Activated T-helper 1 cell treated with anti-CD3 and anti-CD28 coated beads, Interleukin-12 subunit alpha, Interleukin-12 subunit beta, Interleukin-2, Interleukin-4 antibody, amounts not matched to agents 30 ng/mL and 10 ng/mL and 1 ng/mL, durations not matched to agents 14 hours and 24 hours and 36 hours (primary cell): ENCODE measurements at regions of chr3 and their contacts with region 1.

Region 1: GRCh38 chr3:129439817-129440617 is at the starts of genes IFT122 and MBD4:
- DNase-seq: peak; percentile 100
- H3K4me3 Mint-ChIP-seq: peak within 1 kb of the TSS; percentile 89
- H3K27ac Mint-ChIP-seq: peak within 1 kb of the TSS; percentile 98
- H3K4me1 Mint-ChIP-seq: peaks cover 63% of the 10 kb centered on the region
- H3K27me3 Mint-ChIP-seq: no peaks in the 10 kb centered on the region
- total RNA-seq, gene IFT122: 10.0 and 14.7 TPM in 2 replicates
- total RNA-seq, gene MBD4: 44.1 and 53.3 TPM in 2 replicates

Region 2: DNA sequence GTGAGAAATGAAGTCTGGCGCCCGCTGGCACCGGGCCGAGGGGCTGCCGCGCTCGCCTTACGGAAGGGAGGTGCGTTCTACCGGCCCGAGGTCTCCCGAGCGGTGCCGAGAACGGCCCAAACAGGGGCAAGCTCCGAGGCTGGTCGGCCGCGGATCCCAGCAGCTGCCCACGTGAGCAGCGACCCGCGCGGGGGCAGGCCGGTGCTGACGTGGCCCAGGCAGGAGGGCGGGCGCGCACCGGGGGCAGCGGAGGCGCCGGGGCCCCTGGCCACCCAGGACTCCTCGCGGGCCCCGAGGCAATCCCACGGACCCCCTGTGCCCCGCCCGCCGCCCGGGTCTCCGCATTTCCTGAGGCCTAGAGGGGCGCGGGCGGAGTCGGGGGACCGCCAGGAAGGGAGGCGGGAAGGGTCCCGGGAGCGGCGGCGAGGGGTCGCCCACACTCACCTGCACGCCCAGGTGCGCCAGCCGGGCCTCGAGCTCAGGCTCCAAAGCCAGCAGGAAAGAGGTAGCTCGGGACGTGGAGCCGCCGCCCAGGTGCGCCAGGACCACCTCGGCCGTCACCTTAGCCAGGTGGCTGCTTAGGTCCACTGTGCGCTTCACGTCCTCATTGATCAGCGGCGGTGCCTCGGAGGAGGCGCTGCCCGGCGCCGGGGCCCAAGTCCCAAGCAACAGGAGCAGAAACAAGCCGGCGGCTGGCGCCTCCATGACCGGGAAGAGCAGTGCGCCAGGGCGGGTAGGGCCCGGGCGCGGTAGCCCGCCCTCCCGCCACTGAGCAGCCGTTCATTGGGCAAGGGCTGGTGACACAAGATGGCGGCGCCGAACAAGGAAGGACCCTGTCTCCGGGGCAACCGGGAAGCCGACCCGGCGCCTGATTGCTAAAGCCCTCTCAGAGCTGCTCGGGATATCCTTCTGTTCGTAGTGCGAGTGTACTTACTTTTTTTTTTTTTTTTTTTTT is 789.6 kb before region 1 on chr3 and contains the start of gene RPN1:
- intact Hi-C with region 1: loop called (anchors 5 kb)
- DNase-seq: peak; percentile 94
- H3K4me3 Mint-ChIP-seq: peak within 1 kb of the TSS; percentile 90
- H3K27ac Mint-ChIP-seq: peak within 1 kb of the TSS; percentile 92
- H3K4me1 Mint-ChIP-seq: peaks cover 26% of the 10 kb centered on the region
- H3K27me3 Mint-ChIP-seq: no peaks in the 10 kb centered on the region
- total RNA-seq, gene RPN1: 190 and 194 TPM in 2 replicates

Region 3: DNA sequence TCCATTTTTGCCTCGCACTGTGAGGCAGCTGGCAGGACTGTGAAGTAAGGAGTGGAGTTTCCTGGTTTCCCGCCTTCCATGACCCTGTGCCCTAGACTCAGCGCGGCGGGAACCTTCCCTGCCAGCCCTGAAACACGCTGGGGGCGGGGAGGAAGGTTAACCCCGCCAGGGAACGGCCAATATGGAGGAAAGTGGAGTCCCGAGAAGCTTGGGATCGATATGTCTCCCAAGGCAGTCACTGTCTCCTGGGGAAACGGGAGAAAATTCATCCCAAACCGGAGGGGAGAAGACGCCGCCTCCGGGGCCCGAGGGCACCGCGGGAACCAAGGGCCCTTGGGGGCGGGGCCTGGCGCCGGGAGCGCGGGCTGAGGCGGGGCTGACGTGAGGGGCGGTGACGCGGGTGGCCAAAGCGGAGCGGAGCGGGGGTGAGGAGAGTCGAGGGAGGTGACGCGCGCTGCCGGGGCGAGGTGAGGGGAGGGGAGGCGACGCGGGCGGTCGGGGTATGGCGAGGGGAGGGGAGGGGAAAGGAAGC is 161.5 kb before region 1 on chr3 and contains the start of gene HMCES:
- intact Hi-C with region 1: loop called (anchors 1 kb)
- DNase-seq: peak; percentile 92
- H3K4me3 Mint-ChIP-seq: peak within 1 kb of the TSS; percentile 93
- H3K27ac Mint-ChIP-seq: peak within 1 kb of the TSS; percentile 97
- H3K4me1 Mint-ChIP-seq: peaks cover 48% of the 10 kb centered on the region
- H3K27me3 Mint-ChIP-seq: no peaks in the 10 kb centered on the region
- total RNA-seq, gene HMCES: 59.4 and 61.6 TPM in 2 replicates

Region 4: DNA sequence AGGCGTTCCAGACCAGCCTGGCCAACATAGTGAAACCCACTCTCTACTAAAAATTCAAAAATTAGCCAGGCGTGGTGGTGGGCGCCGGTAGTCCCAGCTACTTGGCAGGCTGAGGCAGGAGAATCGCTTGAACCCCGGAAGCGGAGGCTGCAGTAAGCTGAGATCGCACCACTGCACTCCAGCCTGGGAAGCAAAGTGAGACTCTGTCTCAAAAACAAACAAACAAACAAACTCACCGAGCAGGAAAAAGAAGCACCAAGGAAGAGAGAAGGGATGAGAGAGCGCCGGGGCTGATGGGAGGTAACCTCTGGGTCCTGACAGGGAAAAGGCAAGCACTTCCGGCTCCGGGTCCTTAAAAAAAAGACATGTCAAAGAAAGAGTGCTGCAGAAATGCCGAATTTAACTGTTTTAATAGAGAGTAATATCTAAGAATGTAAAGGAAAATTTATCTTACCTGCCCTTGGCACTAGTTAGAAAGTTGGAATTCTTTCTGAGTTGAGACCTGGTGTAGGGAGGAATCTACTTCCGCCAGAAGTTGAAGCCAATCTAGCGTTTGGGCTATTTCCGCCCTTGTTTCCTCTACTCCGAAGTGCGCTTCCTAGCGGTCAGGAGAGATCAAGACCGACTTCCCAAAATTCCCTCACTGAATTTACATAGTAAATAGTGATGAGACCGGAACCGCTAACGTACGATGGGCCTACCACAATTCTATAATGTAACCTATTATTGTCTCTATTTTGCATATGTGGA is 40.7 kb before region 1 on chr3:
- intact Hi-C with region 1: loop called (anchors 1 kb)
- DNase-seq: peak; percentile 73
- H3K4me3 Mint-ChIP-seq: peak overlapping the region; percentile 96
- H3K27ac Mint-ChIP-seq: peak overlapping the region; percentile 94
- H3K4me1 Mint-ChIP-seq: peaks cover 23% of the 10 kb centered on the region
- H3K27me3 Mint-ChIP-seq: no peaks in the 10 kb centered on the region

Region 5: DNA sequence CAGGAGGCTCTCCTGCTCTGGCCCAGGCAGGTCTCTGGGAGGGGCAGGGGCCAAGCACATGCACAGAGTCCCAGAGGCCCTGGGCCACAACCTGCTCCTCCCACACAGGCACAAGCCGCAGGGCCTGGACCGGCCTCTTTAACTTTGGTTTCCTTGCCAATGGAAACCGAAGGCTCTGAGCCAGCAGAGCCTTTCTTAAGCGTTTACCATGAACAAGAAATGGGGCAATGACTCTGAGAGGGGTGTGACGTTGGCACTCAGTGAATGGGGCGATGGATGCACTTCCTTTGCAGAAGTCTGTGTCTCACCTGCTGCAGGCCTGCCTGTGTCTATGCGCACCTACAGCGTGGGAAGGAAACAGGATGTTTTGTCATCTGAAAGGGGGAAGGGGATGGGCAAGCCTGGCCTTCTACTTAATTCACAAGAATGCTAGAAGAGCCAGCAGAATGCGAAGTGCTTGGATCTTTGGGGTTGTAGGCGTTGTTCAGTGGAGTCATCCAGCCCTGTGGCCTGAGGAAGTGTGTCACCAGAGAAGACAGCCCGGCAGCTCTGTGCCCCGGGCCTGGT is 41.8 kb after region 1 on chr3:
- intact Hi-C with region 1: no loop called
- DNase-seq: peak; percentile 4
- H3K4me3 Mint-ChIP-seq: no peak overlapping the region
- H3K27ac Mint-ChIP-seq: peak overlapping the region; percentile 82
- H3K4me1 Mint-ChIP-seq: peaks cover 8% of the 10 kb centered on the region
- H3K27me3 Mint-ChIP-seq: no peaks in the 10 kb centered on the region

Region 6: DNA sequence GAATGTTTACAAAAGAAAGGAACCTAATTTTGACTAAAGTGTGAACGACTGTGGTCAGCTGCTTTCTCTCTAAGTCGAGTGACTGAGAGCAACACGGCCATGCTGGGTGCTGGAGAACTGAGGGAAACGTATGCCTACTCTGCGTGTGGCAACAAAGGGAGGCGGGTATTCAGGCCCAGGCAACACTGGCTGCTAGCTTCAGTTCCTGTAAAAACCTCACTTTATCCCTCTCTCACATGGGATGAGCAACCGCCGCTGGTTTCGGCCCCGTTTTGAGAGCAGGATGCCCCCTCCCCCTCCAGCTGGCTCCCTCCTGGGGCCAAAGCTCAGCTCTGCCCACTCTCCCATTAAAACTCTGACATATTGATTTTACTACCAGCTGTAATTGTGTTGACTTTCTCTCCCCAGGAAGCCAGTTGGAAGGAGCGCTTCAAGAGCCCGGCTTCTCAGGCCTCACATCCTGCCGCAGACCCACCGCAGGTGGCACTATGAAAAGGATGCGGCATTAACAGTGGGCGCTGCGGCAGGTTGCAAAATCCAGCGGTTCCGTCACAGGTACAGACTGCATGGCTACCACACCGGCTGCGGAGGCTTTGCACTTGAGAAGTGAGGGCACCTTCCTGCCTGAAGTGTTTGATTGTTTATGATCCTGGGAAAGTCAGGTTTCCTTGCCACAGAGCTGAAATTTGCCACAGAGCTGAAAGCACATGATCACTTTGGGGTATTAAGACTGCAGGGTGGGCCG is 153.8 kb after region 1 on chr3:
- intact Hi-C with region 1: loop called (anchors 5 kb)
- DNase-seq: peak; percentile 61
- H3K4me3 Mint-ChIP-seq: peak overlapping the region; percentile 24
- H3K27ac Mint-ChIP-seq: peak overlapping the region; percentile 61
- H3K4me1 Mint-ChIP-seq: peaks cover 18% of the 10 kb centered on the region
- H3K27me3 Mint-ChIP-seq: peaks cover 51% of the 10 kb centered on the region

Region 7: GRCh38 chr3:129627429-129628168 is 187.6 kb after region 1 on chr3:
- intact Hi-C with region 1: loop called (anchors 5 kb)
- DNase-seq: peak; percentile 22
- H3K4me3 Mint-ChIP-seq: peak overlapping the region; percentile 82
- H3K27ac Mint-ChIP-seq: peak overlapping the region; percentile 76
- H3K4me1 Mint-ChIP-seq: peaks cover 20% of the 10 kb centered on the region
- H3K27me3 Mint-ChIP-seq: peaks cover 16% of the 10 kb centered on the region

Region 8: GRCh38 chr3:130111185-130111864 is 671.3 kb after region 1 on chr3:
- intact Hi-C with region 1: loop called (anchors 1 kb)
- DNase-seq: peak; percentile 98
- H3K4me3 Mint-ChIP-seq: peak overlapping the region; percentile 96
- H3K27ac Mint-ChIP-seq: peak overlapping the region; percentile 97
- H3K4me1 Mint-ChIP-seq: peaks cover 20% of the 10 kb centered on the region
- H3K27me3 Mint-ChIP-seq: peaks cover 6% of the 10 kb centered on the region